Psoas muscle (tissue), 8 donors: ENCODE measurements at regions of chr17 and their contacts with region 1.

Region 1: DNA sequence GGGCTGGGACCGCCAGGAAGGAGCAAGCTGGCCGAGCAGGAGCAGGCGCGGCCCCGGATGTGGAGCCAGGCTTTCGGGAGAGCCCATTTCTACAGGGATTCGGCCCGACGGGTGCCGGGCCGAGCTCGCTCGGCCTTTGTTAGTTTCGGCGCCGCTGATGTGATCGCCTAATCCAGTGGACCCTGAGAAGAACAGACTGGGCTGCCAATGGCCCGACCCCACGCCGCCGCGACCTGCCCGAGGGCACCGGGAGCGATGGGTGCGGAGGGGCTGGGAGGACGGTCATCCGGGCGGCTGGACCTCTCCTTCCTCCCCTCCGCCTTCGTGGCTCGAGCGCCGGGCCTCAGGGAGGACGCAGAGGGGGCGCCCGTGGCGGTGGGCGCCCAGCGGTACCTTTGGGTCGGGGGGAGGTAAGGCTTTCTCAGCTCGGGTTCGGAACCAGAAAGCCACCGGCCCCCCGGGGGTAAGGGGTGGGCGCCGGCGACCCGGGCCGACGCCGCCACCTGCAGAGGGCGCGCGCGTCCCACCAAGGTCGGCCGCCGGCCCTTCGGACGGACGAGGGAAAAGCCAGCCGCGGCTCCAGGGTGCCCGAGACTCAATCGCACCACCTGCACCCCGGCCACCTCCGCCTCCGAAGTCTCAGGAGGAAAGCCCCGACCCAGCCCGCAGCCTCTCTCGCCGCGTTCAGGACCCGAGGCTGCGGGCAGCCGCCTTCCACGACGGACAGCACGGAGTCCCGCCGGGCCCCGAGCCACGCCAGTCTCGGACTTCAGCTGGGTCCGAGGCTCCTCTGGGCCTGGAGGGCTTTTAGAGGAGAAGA is 7.1 kb downstream of the CBX8 start:
- DNase-seq: peak; percentile 55 to 72
- ATAC-seq: peak; percentile 73 to 83 (median 80)
- H3K4me3 ChIP-seq: no peak overlapping the region
- H3K27ac ChIP-seq: no peak overlapping the region
- H3K4me1 ChIP-seq: peaks cover 9% of the 10 kb centered on the region
- H3K27me3 ChIP-seq: peaks cover 0 to 83% (median 38%) of the 10 kb centered on the region in 3 donors
- CTCF ChIP-seq: peak; percentile 68

Region 2: DNA sequence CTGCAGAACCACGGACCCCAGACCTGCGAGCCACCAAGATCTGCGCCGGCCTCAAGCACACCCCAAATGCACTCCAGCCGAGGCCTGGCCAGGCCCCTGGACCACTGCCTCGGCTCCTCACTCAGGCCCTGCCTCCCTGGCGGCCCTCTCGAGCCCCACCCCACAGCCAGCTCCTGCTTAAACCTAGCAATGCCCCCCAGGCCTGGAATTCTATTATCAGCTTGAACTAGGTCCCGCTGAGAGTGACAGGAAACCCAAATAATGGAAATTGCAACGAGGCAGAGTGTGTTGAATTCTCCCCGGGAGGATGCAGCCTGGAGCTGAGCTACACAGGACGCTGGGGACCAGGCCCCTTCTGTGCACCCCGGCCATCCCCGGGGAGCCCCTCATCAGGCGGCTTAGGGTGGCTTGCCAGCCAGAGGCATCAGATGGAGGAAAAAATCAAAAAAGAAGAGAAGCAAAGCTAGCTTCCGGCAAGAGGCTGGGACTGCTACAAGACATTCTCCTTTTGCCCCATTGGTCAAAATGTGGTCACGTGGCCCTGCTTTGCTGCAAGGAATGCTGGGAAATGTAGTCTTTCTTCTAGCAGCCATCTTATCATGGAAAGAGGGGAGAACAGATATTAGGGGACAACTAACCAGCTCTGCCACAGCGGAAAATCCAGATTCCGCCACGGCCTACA is 61.4 kb before region 1 on chr17:
- intact Hi-C with region 1: no loop called
- DNase-seq: peak; percentile 77 to 83
- ATAC-seq: peak; percentile 83 to 97 (median 88)
- H3K4me3 ChIP-seq: peak overlapping the region; percentile 58
- H3K27ac ChIP-seq: no peak overlapping the region
- H3K4me1 ChIP-seq: no peaks in the 10 kb centered on the region
- H3K27me3 ChIP-seq: peaks cover 0 to 2% (median 0%) of the 10 kb centered on the region in 3 donors
- CTCF ChIP-seq: no peak

Region 3: GRCh38 chr17:79915850-79916430 is 126.2 kb after region 1 on chr17:
- intact Hi-C with region 1: loop called (anchors 5 to 10 kb)
- DNase-seq: peak; percentile 13 to 57
- ATAC-seq: no peak
- H3K4me3 ChIP-seq: no peak overlapping the region
- H3K27ac ChIP-seq: no peak overlapping the region
- H3K4me1 ChIP-seq: peaks cover 13% of the 10 kb centered on the region
- H3K27me3 ChIP-seq: peaks cover 0 to 10% (median 0%) of the 10 kb centered on the region in 3 donors
- CTCF ChIP-seq: peak; percentile 12

Region 4: DNA sequence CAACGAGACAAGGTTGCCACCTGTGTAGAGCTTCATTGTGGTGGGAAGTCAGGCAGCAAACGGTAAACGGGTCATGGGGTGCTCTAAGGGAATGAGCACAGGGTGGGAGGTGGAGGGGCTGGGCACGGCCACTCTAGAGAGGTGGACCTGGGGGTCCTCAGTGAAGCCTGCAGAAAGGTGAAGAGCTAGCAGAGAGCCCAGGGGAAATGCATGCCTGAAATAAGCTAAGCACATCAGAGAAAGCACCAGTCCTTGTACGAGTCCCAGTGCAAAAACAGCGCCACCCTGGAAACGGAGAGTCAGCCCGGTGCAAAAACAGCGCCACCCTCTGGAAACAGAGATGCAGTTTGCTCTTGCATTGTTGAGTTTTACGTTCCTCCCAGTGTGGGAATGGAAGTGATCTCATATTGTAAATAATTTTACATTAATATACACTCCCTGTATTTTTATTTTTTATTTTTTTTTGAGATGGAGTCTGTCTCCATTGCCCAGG is 180.9 kb after region 1 on chr17:
- intact Hi-C with region 1: loop called in 1 of 2 experiments (anchors 5 kb)
- DNase-seq: no peak
- ATAC-seq: no peak
- H3K4me3 ChIP-seq: no peak overlapping the region
- H3K27ac ChIP-seq: no peak overlapping the region
- H3K4me1 ChIP-seq: no peaks in the 10 kb centered on the region
- H3K27me3 ChIP-seq: peaks cover 0 to 13% (median 0%) of the 10 kb centered on the region in 3 donors
- CTCF ChIP-seq: peak; percentile 33

Region 5: DNA sequence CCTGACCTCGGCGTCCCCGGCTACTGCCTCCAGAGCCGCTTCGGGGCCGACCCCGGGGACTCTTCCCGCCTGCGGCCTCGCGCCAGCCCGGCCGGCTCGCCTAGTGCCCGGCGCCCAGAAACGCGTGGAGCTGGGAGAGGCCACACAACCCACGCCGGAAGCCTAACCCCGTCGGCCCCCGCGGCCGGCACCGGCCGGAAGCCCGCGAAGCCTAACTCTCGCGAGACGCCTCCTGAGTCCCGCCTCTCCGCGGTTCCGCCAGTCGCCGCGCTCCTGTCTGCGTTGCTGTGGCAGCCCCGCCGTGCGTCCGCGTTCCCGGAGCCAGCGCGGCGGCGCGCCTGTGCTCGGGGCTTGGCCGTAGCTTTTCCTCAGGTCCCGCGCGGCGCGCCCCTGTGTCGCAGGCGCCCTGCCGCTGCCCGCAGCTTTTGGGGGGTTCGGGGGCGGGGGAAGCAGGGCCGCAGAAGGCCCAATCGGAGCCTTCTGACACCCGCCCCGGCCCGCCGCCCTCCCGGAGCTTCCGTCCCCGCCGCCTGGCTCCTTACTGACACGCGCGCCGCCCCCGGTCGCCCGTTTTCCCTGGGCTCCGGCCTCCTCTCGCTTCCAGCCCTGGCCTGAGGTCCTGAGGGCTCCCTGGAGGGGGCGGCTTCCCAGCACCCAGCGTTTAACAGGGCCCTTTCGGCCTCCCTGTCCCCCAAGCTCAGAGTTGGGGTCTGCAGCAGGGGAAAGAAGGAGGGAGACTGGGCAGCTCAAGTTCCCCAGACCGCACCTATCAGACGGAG is 665.0 kb after region 1 on chr17:
- intact Hi-C with region 1: no loop called
- DNase-seq: peak; percentile 97 to 99
- ATAC-seq: peak; percentile 88 to 90 (median 89)
- H3K4me3 ChIP-seq: peak overlapping the region; percentile 79
- H3K27ac ChIP-seq: peak overlapping the region; percentile 98
- H3K4me1 ChIP-seq: peaks cover 30% of the 10 kb centered on the region
- H3K27me3 ChIP-seq: no peaks in the 10 kb centered on the region
- CTCF ChIP-seq: no peak